ENCODE measurements at regions of chr1 and their contacts with region 1.

Region 1: GRCh38 chr1:36553591-36554322 is 71.0 kb upstream of the CSF3R start:
- DNase-seq: peak; percentile 58 to 93
- H3K4me3 ChIP-seq: no peak overlapping the region
- H3K27ac ChIP-seq: no peak overlapping the region
- H3K4me1 ChIP-seq: no peaks in the 10 kb centered on the region
- H3K27me3 ChIP-seq: peaks cover 0 to 5% (median 2%) of the 10 kb centered on the region in 4 experiments; a peak in 4 of 7 replicates
- CTCF ChIP-seq: peak; percentile 85 to 97 (median 91)
- EP300 ChIP-seq: no peak
- POLR2A ChIP-seq: no peak
- RAD21 ChIP-seq: peak; percentile 97

Region 2: DNA sequence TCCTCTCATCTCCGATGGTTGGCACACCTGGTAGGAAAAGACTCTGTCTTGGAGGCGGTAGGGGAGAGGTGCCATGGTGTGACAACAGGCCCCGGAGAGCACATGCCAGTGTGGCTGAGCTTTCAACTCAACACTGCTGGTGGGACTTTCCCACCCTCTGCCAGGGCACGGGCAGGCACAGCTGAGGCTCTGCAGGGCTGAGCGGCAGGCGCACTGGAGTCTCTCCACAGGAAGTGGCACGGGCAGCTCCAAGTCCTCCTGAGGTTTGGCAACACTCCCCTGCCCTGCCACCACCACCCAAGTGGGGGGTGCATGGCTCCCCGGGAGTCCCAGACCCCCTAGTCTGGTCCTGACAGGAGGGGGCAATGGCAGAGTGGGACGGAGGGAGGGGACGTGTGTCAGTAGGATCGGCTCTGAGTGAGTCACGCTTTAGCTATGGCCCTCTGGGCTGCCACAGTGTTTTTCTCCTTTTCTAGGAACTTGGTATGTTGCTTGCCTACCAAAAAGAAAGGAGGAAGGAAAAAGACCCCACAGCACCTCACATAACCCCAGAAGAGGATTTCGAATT is 203.0 kb before region 1 on chr1:
- CTCF ChIA-PET with region 1: no interaction called
- POLR2A ChIA-PET with region 1: no interaction called
- DNase-seq: no peak
- H3K4me3 ChIP-seq: no peak overlapping the region
- H3K27ac ChIP-seq: no peak overlapping the region
- H3K4me1 ChIP-seq: peaks cover 0 to 6% (median 0%) of the 10 kb centered on the region in 4 experiments; a peak in 1 of 7 replicates
- H3K27me3 ChIP-seq: no peaks in the 10 kb centered on the region
- CTCF ChIP-seq: no peak
- EP300 ChIP-seq: no peak
- POLR2A ChIP-seq: no peak
- RAD21 ChIP-seq: no peak

Region 3: GRCh38 chr1:36542962-36543515 is 10.7 kb before region 1 on chr1:
- CTCF ChIA-PET with region 1: interaction called, 15 read pairs
- POLR2A ChIA-PET with region 1: no interaction called
- DNase-seq: no peak
- H3K4me3 ChIP-seq: no peak overlapping the region
- H3K27ac ChIP-seq: no peak overlapping the region
- H3K4me1 ChIP-seq: no peaks in the 10 kb centered on the region; a peak in 1 of 7 replicates
- H3K27me3 ChIP-seq: no peaks in the 10 kb centered on the region
- CTCF ChIP-seq: peak; percentile 21 to 76 (median 68)
- EP300 ChIP-seq: no peak
- POLR2A ChIP-seq: no peak
- RAD21 ChIP-seq: peak; percentile 21 to 45; a peak in 2 of 4 replicates

Region 4: GRCh38 chr1:36565576-36566501 is 12.1 kb after region 1 on chr1:
- CTCF ChIA-PET with region 1: interaction called, 125 read pairs
- POLR2A ChIA-PET with region 1: no interaction called
- DNase-seq: peak in 1 of 2 experiments; percentile 42
- H3K4me3 ChIP-seq: no peak overlapping the region
- H3K27ac ChIP-seq: no peak overlapping the region
- H3K4me1 ChIP-seq: peaks cover 0 to 4% (median 0%) of the 10 kb centered on the region in 4 experiments; a peak in 2 of 7 replicates
- H3K27me3 ChIP-seq: no peaks in the 10 kb centered on the region; a peak in 2 of 7 replicates
- CTCF ChIP-seq: no peak
- EP300 ChIP-seq: no peak
- POLR2A ChIP-seq: no peak
- RAD21 ChIP-seq: no peak

Region 5: DNA sequence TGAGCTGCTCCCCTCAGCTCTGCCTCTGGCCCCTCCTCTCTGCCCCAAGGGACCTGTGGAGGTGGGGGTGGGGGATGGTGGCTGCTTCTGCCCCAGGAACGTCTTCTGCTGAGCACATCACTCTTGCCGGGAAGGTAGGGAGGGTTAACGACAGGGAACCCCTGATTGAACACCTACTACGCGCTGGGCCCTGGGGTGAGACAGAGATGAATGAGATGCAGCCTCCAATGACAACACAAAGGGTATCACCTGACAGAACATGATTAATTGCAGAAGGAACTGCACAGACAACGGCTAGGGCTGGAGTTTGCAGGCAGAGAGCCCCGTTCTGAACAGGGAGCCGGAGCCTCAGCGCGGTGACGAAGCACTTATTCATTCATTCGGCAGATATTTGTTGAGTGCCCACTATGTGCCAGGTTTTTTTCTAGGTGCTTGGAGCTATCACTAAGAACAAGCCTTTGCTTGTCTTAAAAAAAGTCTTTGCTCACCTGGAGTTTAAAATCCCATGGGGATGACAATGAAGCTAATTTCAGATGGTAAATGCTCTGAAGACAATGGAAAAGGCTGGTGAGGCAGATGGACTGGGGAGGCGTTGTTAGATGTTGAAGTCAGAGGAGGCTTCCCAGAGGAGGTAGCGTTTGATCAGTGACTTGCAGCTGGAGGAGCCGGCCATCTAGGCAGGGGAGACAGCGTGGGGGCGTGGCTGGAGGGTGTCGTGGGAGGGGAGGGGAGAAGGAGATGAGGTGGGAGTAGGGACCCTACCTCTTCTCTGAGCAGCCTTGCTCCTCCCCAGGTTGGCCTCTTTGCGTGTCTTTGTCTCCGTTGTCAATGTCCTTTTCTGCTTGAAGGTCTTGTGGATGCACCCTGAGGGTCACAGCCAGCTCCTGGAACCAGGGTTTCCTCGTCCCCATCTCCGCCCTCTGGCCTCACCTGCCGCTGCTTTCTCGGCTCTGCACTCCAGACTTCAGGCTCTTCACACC is 32.1 kb after region 1 on chr1:
- CTCF ChIA-PET with region 1: interaction called, 11 read pairs
- POLR2A ChIA-PET with region 1: interaction called, 3 read pairs
- DNase-seq: no peak
- H3K4me3 ChIP-seq: no peak overlapping the region
- H3K27ac ChIP-seq: no peak overlapping the region
- H3K4me1 ChIP-seq: peaks cover 12 to 38% (median 21%) of the 10 kb centered on the region in 4 experiments
- H3K27me3 ChIP-seq: no peaks in the 10 kb centered on the region; a peak in 1 of 7 replicates
- CTCF ChIP-seq: no peak
- EP300 ChIP-seq: no peak
- POLR2A ChIP-seq: no peak
- RAD21 ChIP-seq: no peak

Region 6: DNA sequence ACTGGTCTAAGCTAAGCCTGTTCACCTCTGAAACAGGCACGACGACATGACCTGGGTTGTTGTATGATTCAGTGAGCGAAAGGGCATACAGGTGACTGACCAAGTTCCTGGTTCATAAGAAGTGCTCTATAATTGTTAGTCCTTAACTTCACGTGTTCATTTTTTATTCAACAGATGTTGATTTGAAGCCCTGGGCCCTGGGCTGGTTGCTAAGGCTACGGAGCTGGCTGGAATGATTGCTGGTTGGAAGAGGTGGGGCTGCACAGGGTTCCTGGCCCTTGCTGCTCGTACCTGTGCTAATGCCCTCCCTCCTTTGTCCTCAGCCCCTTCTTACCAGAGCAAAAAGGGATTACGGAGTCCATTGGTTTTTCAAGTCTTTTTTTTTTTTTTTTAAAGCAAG is 40.3 kb after region 1 on chr1:
- CTCF ChIA-PET with region 1: interaction called, 12 read pairs
- POLR2A ChIA-PET with region 1: interaction called, 3 read pairs
- DNase-seq: no peak
- H3K4me3 ChIP-seq: no peak overlapping the region
- H3K27ac ChIP-seq: no peak overlapping the region
- H3K4me1 ChIP-seq: peaks cover 0 to 10% (median 2%) of the 10 kb centered on the region in 4 experiments; a peak in 2 of 7 replicates
- H3K27me3 ChIP-seq: no peaks in the 10 kb centered on the region; a peak in 1 of 7 replicates
- CTCF ChIP-seq: no peak
- EP300 ChIP-seq: no peak
- POLR2A ChIP-seq: no peak
- RAD21 ChIP-seq: no peak

Region 7: DNA sequence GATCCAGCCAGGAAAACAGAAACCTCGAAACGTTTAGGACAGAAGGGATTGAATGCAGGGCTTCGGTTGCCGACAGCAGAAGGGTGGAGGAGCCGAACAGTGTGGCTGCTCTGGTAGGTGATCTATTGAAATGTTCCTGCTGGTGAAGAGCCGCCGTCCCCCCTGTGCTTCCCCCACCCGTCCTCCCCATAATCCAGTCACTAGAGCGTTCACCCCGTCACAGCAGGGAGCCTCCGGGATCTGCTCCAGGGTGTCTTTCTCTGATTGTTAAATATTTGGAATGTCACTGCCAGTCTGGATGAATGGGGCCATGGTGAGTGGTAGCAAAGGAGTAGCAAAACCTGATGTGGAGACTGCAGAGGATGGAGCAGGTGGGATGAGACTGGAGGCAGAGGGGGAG is 184.0 kb after region 1 on chr1:
- CTCF ChIA-PET with region 1: no interaction called
- POLR2A ChIA-PET with region 1: no interaction called
- DNase-seq: no peak
- H3K4me3 ChIP-seq: no peak overlapping the region
- H3K27ac ChIP-seq: no peak overlapping the region
- H3K4me1 ChIP-seq: peaks cover 0 to 11% (median 3%) of the 10 kb centered on the region in 4 experiments; a peak in 3 of 7 replicates
- H3K27me3 ChIP-seq: no peaks in the 10 kb centered on the region
- CTCF ChIP-seq: no peak
- EP300 ChIP-seq: no peak
- POLR2A ChIP-seq: no peak
- RAD21 ChIP-seq: no peak

Measured in H1 (cell line).